Common myeloid progenitor, CD34-positive (primary cell): ENCODE measurements at regions of chr12 and their contacts with region 1.

Region 1: GRCh38 chr12:54428050-54429013 is 9.3 kb upstream of the ITGA5 start:
- DNase-seq: peak in 2 of 3 donors; percentile 61 to 74
- H3K4me3 ChIP-seq: peak overlapping the region in 4 of 7 experiments; percentile 1 to 44 (median 30)
- H3K27ac ChIP-seq: peak overlapping the region in 1 of 2 experiments; percentile 63
- H3K4me1 ChIP-seq: peaks cover 4 to 82% (median 55%) of the 10 kb centered on the region in 4 experiments
- H3K27me3 ChIP-seq: no peaks in the 10 kb centered on the region

Region 2: GRCh38 chr12:54390668-54391551 is 37.4 kb before region 1 on chr12:
- CTCF ChIA-PET with region 1: interaction called, 630 read pairs
- POLR2A ChIA-PET with region 1: no interaction called
- DNase-seq: peak; percentile 69 to 87 (median 80)
- H3K4me3 ChIP-seq: peak overlapping the region; percentile 42 to 79 (median 73)
- H3K27ac ChIP-seq: peak overlapping the region; percentile 15 to 73
- H3K4me1 ChIP-seq: peaks cover 3 to 86% (median 54%) of the 10 kb centered on the region in 4 experiments
- H3K27me3 ChIP-seq: no peaks in the 10 kb centered on the region

Region 3: GRCh38 chr12:54411391-54412241 is 16.7 kb before region 1 on chr12:
- CTCF ChIA-PET with region 1: interaction called, 630 read pairs
- POLR2A ChIA-PET with region 1: interaction called, 13 read pairs
- DNase-seq: peak in 2 of 3 donors; percentile 52 to 59
- H3K4me3 ChIP-seq: peak overlapping the region in 5 of 7 experiments; percentile 27 to 77 (median 58)
- H3K27ac ChIP-seq: peak overlapping the region; percentile 93 to 97
- H3K4me1 ChIP-seq: peaks cover 20 to 90% (median 68%) of the 10 kb centered on the region in 4 experiments
- H3K27me3 ChIP-seq: no peaks in the 10 kb centered on the region